Activated CD8-positive, alpha-beta T cell treated with anti-CD3 and anti-CD28 coated beads, Interleukin-2, amount 10 ng/mL, durations not matched to agents 7 days and 5 days (primary cell): ENCODE measurements at regions of chr19 and their contacts with region 1.

Region 1: DNA sequence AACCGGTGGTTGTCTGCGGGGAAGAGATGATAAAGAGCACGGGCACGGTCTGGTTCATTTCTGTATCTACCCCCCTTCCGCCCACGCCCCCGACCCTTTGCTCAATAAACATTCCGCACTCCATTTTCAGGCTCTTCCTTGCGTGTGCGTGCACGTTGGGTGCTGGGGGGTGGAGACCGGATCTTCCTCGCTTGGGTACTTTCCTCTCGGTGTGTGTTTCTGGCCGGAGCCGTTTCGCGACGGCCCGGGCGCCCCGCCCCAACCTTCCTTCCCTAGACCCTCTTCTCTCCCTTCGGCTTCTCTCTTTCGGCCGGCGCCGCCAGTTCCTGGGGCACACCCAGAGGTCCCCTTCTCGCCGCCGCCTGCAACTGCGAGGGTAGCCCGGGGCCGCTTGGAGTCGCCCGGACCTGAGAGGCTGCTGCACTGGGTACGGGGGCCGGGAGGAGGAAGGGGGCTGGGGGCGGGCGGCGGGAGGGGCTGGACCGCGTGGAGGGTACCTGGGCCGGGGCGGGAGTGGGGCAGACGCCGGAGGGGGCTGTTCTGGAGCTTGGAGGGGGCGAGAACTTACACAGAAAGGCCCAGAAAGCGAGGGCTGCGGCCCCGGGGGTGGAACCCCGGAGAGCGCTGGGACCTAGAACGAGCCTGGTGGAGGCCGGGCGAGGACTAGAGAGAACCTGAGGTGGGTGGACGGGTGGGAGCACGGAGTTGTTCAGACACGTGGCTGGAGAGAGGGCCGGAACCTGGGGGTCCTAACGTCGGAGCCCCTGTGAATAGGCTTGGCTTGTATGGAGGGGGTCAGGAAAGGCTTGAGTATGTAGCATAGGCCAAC is at the start of gene ZNF581:
- DNase-seq: peak; percentile 82
- ATAC-seq: peak; percentile 61
- H3K4me3 Mint-ChIP-seq: peak within 1 kb of the TSS; percentile 86
- H3K27ac Mint-ChIP-seq: peak within 1 kb of the TSS; percentile 95
- H3K4me1 Mint-ChIP-seq: peaks cover 57% of the 10 kb centered on the region
- H3K27me3 Mint-ChIP-seq: no peaks in the 10 kb centered on the region
- total RNA-seq, gene ZNF581: 22.7 to 24.4 TPM

Region 2: GRCh38 chr19:55653758-55654539 is 10.4 kb after region 1 on chr19:
- CTCF ChIA-PET with region 1: interaction called, 17 read pairs
- POLR2A ChIA-PET with region 1: interaction called, 7 read pairs
- DNase-seq: peak; percentile 100
- ATAC-seq: peak; percentile 83
- H3K4me3 Mint-ChIP-seq: peak overlapping the region; percentile 83
- H3K27ac Mint-ChIP-seq: peak overlapping the region; percentile 94
- H3K4me1 Mint-ChIP-seq: peaks cover 42% of the 10 kb centered on the region
- H3K27me3 Mint-ChIP-seq: no peaks in the 10 kb centered on the region